Spleen (tissue), 13 donors: ENCODE measurements at regions of chr16 and their contacts with region 1.

Region 1: DNA sequence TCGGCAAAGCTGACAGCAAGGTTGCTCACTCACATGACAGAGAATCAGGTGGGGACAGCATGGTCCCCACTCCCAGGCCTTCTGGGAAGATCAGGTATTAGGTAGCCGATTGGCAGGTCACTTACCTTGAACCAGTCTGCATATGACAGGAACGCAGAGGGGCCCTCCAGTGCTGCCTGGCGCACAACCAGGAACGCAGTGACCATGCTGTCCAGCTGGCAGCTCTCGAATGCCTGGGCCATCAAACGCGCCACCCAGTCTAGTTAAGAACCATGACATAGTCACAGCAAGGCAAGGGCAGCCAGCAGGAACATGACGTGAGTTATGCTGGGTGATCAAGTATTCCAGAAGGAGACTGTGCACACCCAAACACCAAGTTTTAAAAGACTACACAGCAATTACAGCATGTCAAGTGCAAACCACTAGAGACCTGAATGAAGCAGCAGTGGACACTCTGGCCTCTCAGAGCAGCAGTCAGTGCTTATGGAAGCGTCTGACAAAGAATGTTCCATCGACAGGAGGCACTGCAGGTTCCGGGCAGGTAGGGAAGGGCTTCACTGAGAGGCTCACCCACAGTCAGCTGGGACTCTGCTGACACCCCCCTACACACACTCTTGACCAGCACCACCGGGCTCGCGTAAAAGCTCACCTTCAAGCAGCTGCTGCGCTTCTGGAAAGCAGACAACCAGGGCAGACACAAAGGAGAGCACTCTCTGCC is 25.0 kb downstream of the FANCA start:
- DNase-seq: no peak
- H3K4me3 ChIP-seq: no peak overlapping the region
- H3K27ac ChIP-seq: no peak overlapping the region
- H3K4me1 ChIP-seq: peaks cover 0 to 8% (median 0%) of the 10 kb centered on the region in 6 donors
- H3K27me3 ChIP-seq: no peaks in the 10 kb centered on the region
- CTCF ChIP-seq: no peak
- POLR2A ChIP-seq: no peak

Region 2: GRCh38 chr16:89700100-89700648 is 91.3 kb before region 1 on chr16:
- intact Hi-C with region 1: loop called (anchors 5 kb)
- DNase-seq: peak; percentile 100
- H3K4me3 ChIP-seq: peak overlapping the region; percentile 53 to 82 (median 72)
- H3K27ac ChIP-seq: peak overlapping the region; percentile 61 to 95 (median 87)
- H3K4me1 ChIP-seq: peaks cover 13 to 63% (median 40%) of the 10 kb centered on the region in 6 donors
- H3K27me3 ChIP-seq: no peaks in the 10 kb centered on the region
- CTCF ChIP-seq: peak; percentile 85 to 98 (median 91)
- POLR2A ChIP-seq: peak in 1 of 3 donors; percentile 59